ENCODE measurements at regions of chr5 and their contacts with region 1.

Region 1: GRCh38 chr5:149442563-149443182 is 63.6 kb upstream of the IL17B start:
- DNase-seq: peak; percentile 95
- ATAC-seq: peak; percentile 79
- H3K4me3 Mint-ChIP-seq: no peak overlapping the region
- H3K27ac Mint-ChIP-seq: peak overlapping the region; percentile 98
- H3K4me1 Mint-ChIP-seq: peaks cover 38% of the 10 kb centered on the region
- H3K27me3 Mint-ChIP-seq: no peaks in the 10 kb centered on the region
- CTCF ChIP-seq: peak; percentile 77

Region 2: DNA sequence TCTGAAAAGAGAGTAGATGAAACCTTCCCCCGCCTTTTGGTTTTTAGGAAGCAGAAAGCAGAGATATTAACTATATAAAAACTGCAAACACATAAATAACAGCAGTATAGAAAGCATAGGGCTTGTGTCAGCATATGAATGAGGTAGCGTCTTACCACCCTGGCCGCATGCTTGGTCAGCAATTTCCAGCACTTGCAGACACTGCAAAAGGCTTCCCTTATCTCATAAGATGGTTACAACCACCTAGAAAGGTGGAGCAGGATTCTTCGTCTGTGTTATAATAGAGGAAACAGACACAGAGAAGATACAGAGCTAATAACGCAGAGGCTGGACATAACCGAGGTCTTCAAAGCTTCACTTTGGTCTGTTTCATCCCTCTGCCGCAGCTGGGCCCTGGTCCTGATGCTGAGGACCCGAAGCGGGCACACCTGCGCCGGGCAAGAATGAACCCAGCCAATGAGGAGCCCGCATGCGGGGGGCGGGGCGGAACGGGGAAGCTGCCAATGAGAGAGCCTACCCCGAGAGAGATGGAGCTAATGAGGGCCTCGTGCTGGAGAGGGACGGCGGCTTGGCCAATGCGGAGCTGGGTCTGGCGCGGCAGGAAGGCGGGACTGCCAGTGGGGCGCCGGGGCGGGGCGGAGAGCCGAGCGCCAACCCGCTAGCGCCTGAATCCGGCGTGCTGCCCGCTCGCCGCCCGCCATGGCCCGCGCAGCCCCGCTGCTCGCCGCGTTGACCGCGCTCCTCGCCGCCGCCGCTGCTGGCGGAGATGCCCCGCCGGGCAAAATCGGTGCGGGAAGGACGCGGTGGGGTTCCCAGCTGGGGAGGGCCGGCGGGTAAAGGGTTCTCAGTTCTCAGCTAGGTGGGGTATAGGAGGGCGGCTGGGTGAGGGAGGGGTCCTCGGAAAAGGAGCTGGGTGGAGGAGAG is 85.0 kb before region 1 on chr5 and contains the start of gene PCYOX1L:
- CTCF ChIA-PET with region 1: interaction called, 13 read pairs
- POLR2A ChIA-PET with region 1: no interaction called
- DNase-seq: peak; percentile 99
- ATAC-seq: peak; percentile 100
- H3K4me3 Mint-ChIP-seq: peak within 1 kb of the TSS; percentile 87
- H3K27ac Mint-ChIP-seq: no peak within 1 kb of the TSS
- H3K4me1 Mint-ChIP-seq: peaks cover 16% of the 10 kb centered on the region
- H3K27me3 Mint-ChIP-seq: peaks cover 3% of the 10 kb centered on the region; the same call in 1 of the 2 replicates
- CTCF ChIP-seq: no peak
- total RNA-seq, gene PCYOX1L: 8.1 to 19.2 TPM (median 17.2 TPM) in 3 replicates

Region 3: DNA sequence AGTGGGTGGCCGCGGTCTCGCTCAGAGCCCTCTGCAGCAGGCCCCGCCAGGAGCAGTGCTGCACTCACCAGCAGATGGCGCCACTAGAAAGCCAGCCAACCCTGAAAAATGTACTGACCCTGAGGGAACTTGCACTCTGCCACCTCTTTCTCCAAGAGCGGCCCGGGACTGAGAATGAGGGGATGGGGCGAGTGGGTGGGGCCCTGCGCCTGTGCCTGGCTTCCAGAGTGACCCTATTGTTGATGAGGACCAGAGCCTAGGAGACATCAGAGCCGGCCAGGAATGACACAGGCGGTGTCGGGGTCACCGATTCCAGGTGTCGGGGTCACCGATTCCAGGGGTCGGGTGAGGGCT is 60.7 kb before region 1 on chr5:
- CTCF ChIA-PET with region 1: interaction called, 22 read pairs
- POLR2A ChIA-PET with region 1: no interaction called
- DNase-seq: peak; percentile 93
- ATAC-seq: peak; percentile 91
- H3K4me3 Mint-ChIP-seq: no peak overlapping the region
- H3K27ac Mint-ChIP-seq: no peak overlapping the region
- H3K4me1 Mint-ChIP-seq: peaks cover 12% of the 10 kb centered on the region
- H3K27me3 Mint-ChIP-seq: no peaks in the 10 kb centered on the region
- CTCF ChIP-seq: peak; percentile 92

Region 4: DNA sequence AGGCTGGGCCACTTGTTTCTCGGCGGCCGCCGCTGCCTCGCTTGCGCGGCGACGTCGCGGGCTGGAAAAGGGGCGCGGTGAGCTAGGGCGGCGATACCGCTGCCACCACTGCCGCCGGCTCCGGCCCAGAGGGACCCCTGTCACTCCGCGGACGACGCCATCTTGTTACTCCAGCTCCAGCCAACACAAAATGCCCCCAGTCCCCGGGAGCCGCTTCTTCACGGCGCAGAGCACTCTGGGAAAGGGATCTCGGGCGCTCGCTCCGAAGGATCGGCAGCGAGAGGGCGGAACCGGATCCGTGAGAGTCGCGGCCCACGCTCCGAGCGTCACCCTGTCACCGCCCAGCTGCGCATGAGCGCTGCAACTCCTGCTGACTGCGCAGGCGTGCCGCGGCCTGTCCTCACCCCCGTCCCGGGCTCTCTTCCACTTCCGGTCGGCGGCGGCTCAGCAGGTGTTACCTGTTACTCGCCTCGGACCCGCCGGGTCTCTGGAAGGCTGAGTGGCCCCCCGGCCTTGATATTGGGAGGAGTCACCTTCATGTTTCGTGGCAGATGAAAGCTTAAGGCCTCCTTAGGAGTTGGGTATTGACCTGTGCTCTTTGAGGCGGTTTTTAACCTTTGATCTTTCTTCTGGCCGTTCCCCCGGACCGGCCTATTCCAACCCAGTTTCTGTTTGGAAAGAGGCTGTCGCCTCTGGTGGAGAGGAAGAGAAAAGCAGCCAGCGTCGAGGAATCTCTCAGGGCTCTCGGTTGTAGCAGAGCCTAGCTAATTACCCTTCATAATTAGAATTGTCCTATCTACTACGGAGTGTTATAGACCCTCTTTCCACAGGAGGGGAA is 108.7 kb after region 1 on chr5 and contains the start of gene CSNK1A1:
- CTCF ChIA-PET with region 1: interaction called, 19 read pairs
- POLR2A ChIA-PET with region 1: interaction called, 5 read pairs
- DNase-seq: peak; percentile 98
- ATAC-seq: peak; percentile 90
- H3K4me3 Mint-ChIP-seq: peak within 1 kb of the TSS; percentile 98
- H3K27ac Mint-ChIP-seq: peak within 1 kb of the TSS; percentile 99
- H3K4me1 Mint-ChIP-seq: peaks cover 33% of the 10 kb centered on the region
- H3K27me3 Mint-ChIP-seq: no peaks in the 10 kb centered on the region
- CTCF ChIP-seq: peak; percentile 47
- total RNA-seq, gene CSNK1A1: 265 to 276 TPM (median 269 TPM) in 3 replicates

Region 5: GRCh38 chr5:149567226-149567625 is 124.6 kb after region 1 on chr5:
- CTCF ChIA-PET with region 1: interaction called, 57 read pairs
- POLR2A ChIA-PET with region 1: no interaction called
- DNase-seq: no peak
- ATAC-seq: no peak
- H3K4me3 Mint-ChIP-seq: no peak overlapping the region
- H3K27ac Mint-ChIP-seq: no peak overlapping the region
- H3K4me1 Mint-ChIP-seq: peaks cover 18% of the 10 kb centered on the region
- H3K27me3 Mint-ChIP-seq: no peaks in the 10 kb centered on the region
- CTCF ChIP-seq: no peak

Region 6: DNA sequence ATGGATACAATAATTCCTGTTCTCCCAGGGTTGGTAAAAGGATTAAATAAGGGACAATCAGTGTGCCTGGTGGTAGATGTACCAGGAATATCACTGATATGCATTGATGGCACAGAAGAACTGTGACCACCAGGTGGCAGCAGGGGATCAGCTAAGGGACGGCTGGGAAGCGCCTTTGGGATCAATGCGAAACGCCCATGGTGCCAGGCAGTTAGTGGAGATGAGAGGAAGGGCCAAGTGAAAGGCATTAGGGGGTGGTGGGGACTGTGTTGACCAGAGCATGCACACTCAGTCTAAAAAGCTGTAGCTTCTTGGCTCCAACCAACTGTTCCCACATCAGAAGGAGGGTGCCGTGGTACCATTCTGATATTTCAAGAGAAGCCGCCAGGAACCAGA is 194.2 kb after region 1 on chr5:
- CTCF ChIA-PET with region 1: no interaction called
- POLR2A ChIA-PET with region 1: no interaction called
- DNase-seq: peak; percentile 50
- ATAC-seq: peak; percentile 78
- H3K4me3 Mint-ChIP-seq: no peak overlapping the region
- H3K27ac Mint-ChIP-seq: no peak overlapping the region
- H3K4me1 Mint-ChIP-seq: peaks cover 24% of the 10 kb centered on the region
- H3K27me3 Mint-ChIP-seq: no peaks in the 10 kb centered on the region
- CTCF ChIP-seq: peak; percentile 59; the same call in 1 of the 2 replicates

Measured in WTC11 (cell line).